T-cell (primary cell): ENCODE measurements at regions of chr16 and their contacts with region 1.

Region 1: GRCh38 chr16:81521151-81521626 is 76.6 kb downstream of the CMIP start:
- DNase-seq: peak; percentile 37 to 92 (median 82)
- ATAC-seq: peak; percentile 74 to 89 (median 81)
- H3K4me3 ChIP-seq: peak overlapping the region in 1 of 2 donors; percentile 2
- H3K4me3 Mint-ChIP-seq: peak overlapping the region in 1 of 3 donors; percentile 3
- H3K27ac ChIP-seq: peak overlapping the region; percentile 95
- H3K27ac Mint-ChIP-seq: peak overlapping the region; percentile 82 to 88
- H3K4me1 ChIP-seq: peaks cover 0 to 70% of the 10 kb centered on the region in 2 experiments
- H3K4me1 Mint-ChIP-seq: peaks cover 34 to 62% (median 53%) of the 10 kb centered on the region in 3 donors
- H3K27me3 ChIP-seq: no peaks in the 10 kb centered on the region
- H3K27me3 Mint-ChIP-seq: no peaks in the 10 kb centered on the region

Region 2: DNA sequence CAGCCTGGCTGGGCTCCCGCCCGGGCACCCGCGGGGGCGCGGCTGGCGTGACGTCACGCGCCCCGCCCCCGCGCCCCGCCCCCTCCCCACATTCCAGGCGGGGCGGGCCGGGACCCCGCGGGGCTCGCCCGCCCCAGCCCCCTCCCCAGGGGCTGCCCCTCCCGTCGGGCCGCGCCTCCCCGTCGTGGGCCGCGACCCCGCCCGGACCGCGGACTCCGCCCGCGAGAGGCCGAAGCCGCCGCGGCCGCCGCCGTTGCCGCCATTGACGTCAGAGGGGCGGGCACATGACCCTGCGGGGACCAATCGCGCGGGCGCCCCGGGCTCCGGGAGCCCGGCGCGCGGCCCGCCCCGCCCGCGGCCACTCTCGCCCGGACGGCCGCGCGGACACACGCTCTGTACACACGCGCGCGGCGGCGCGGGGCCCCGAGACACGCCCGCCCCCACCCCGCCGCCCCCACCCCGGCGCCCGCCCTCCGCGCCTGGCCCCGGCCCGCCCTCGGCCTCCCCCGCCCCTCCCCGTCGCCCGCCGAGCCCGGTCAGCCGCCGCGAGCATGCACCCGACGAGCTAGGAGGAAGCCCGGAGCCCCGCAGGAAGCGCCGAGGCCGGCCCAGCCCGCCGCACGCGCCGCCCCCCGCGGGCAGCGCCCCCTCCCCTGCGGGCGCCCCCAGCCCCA is 76.6 kb before region 1 on chr16 and contains the start of gene CMIP:
- CTCF ChIA-PET with region 1: interaction called in 1 of 2 experiments, 3 read pairs
- POLR2A ChIA-PET with region 1: interaction called, 4 to 11 read pairs
- DNase-seq: peak; percentile 50 to 88 (median 71)
- ATAC-seq: peak; percentile 72 to 80 (median 74)
- H3K4me3 ChIP-seq: peak within 1 kb of the TSS; percentile 59 to 95
- H3K4me3 Mint-ChIP-seq: peak within 1 kb of the TSS; percentile 87 to 97 (median 89)
- H3K27ac ChIP-seq: peak within 1 kb of the TSS; percentile 69
- H3K27ac Mint-ChIP-seq: peak within 1 kb of the TSS; percentile 84 to 90
- H3K4me1 ChIP-seq: peaks cover 12 to 53% of the 10 kb centered on the region in 2 experiments
- H3K4me1 Mint-ChIP-seq: peaks cover 38 to 50% (median 47%) of the 10 kb centered on the region in 3 donors
- H3K27me3 ChIP-seq: no peaks in the 10 kb centered on the region
- H3K27me3 Mint-ChIP-seq: no peaks in the 10 kb centered on the region
- total RNA-seq, gene CMIP: 39.8 to 55.9 (median 42.6) TPM

Region 3: DNA sequence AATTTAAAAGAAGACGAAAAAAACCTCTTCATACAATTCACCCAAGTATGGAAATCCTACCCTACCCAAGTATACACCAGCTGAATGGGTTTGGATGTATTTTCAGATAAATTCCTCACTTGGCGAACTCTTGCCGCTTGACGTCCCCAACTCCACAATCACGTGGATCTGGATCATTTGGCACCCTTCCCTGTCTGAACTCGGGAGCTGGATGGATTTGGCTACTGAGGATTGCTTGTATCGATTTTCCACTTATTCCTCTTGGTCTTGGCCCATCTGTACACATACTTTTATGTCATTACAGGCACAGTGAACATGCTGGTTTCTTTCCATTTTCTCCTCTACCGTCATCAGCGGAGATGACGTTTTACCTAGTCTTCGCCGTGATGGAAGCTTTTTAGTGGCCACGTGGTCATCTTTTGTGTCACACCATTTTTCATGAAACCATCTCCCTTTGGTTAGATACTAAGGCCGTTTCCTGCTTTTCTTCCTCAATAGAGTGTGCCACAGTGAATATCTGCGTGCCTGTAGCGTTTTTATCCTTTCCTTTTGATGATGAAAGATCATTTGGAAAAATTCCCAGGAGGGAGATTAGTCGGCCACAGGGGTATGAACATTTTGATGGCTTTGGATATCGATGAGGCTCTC is 29.5 kb before region 1 on chr16:
- CTCF ChIA-PET with region 1: no interaction called
- POLR2A ChIA-PET with region 1: no interaction called
- DNase-seq: no peak
- ATAC-seq: no peak
- H3K4me3 ChIP-seq: no peak overlapping the region
- H3K4me3 Mint-ChIP-seq: no peak overlapping the region
- H3K27ac ChIP-seq: no peak overlapping the region
- H3K27ac Mint-ChIP-seq: no peak overlapping the region
- H3K4me1 ChIP-seq: peaks cover 0 to 46% of the 10 kb centered on the region in 2 experiments
- H3K4me1 Mint-ChIP-seq: peaks cover 50 to 57% (median 53%) of the 10 kb centered on the region in 3 donors
- H3K27me3 ChIP-seq: no peaks in the 10 kb centered on the region
- H3K27me3 Mint-ChIP-seq: no peaks in the 10 kb centered on the region

Region 4: DNA sequence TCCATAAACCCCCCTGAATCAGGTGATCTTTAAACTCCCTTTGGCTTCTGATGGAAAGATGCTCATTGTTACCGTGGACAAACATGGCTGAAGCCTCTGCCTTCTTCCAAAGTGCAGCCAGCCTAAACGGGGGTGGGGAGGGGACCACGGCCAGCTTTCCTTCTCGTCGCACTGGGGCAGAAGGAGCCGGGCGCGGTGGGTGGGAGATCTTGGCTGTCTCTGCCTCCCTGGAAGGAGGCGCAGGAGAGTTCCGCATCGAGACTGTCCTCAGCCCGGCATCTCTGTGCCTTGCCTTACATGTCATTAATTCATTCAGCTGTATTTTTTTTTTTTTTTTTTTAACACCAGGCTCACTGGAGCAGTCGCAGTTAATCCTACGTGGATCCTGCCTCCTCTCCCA is 94.6 kb after region 1 on chr16:
- CTCF ChIA-PET with region 1: interaction called in 1 of 2 experiments, 7 read pairs
- POLR2A ChIA-PET with region 1: interaction called, 3 to 10 read pairs
- DNase-seq: no peak
- ATAC-seq: no peak
- H3K4me3 ChIP-seq: no peak overlapping the region
- H3K4me3 Mint-ChIP-seq: no peak overlapping the region
- H3K27ac ChIP-seq: peak overlapping the region; percentile 98
- H3K27ac Mint-ChIP-seq: peak overlapping the region in 1 of 2 donors; percentile 92
- H3K4me1 ChIP-seq: peaks cover 6 to 26% of the 10 kb centered on the region in 2 experiments
- H3K4me1 Mint-ChIP-seq: peaks cover 2 to 9% (median 3%) of the 10 kb centered on the region in 3 donors
- H3K27me3 ChIP-seq: no peaks in the 10 kb centered on the region
- H3K27me3 Mint-ChIP-seq: no peaks in the 10 kb centered on the region